GM12878 (cell line): ENCODE measurements at regions of chr1 and their contacts with region 1.

Region 1: GRCh38 chr1:232950197-232951176 is at the start of gene NTPCR:
- DNase-seq: peak; percentile 79
- ATAC-seq: peak; percentile 89
- H3K4me3 ChIP-seq: peak within 1 kb of the TSS; percentile 70
- H3K27ac ChIP-seq: peak within 1 kb of the TSS; percentile 81
- H3K4me1 ChIP-seq: peaks cover 7% of the 10 kb centered on the region
- H3K27me3 ChIP-seq: no peaks in the 10 kb centered on the region
- CTCF ChIP-seq: no peak
- EP300 ChIP-seq: no peak
- POLR2A ChIP-seq: peak; percentile 78
- RAD21 ChIP-seq: no peak
- polyA plus RNA-seq, gene NTPCR: 77.4 to 84.4 TPM

Region 2: DNA sequence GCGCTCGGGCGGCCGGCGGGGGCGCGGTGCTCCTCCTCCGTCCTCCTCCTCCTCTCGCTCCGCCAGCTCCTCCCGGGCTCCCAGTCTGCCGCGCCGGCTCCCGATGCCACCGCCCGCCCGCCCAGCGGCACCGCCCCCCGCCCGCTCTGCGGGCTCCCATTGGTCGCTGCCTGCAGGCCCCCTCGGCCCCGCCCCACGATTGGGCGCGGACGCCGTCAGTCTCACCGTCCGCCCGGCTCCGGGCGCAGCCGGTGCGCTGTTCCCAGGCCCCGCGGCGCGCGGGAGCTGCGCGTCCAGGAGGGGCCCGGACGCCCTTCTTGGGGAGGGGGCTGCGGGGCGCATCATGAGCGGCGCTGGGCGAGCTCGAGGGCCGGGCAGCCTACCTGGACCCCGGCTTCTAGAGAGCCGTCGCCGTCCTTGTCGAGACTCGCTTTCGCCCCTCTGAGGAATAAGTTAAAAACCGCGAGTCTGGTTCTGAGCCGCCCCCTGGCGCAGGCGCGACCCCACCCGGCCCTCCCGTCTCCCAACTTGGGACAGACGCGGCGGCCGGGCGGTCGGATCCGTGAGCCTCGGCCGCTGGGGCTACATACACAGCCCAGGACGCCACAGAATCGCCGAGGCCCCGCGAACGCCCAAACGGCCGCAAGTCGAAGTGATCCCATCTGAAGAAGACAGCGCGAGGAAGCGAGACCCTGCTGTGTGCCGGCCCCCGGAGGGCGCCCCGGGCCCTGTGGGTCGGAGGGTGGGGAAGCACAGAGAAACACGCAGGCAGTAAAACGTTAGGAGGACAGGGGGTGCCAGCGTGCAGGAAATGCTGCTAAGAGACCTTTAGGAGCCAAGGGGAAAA is 320.2 kb before region 1 on chr1 and contains the start of gene SIPA1L2:
- CTCF ChIA-PET with region 1: no interaction called
- POLR2A ChIA-PET with region 1: no interaction called
- RAD21 ChIA-PET with region 1: no interaction called
- SMC1A ChIA-PET with region 1: no interaction called
- in situ Hi-C with region 1: no loop called
- intact Hi-C with region 1: loop called (anchors 10 kb)
- DNase-seq: peak; percentile 8
- ATAC-seq: peak; percentile 100
- H3K4me3 ChIP-seq: peak within 1 kb of the TSS; percentile 83
- H3K27ac ChIP-seq: no peak within 1 kb of the TSS
- H3K4me1 ChIP-seq: no peaks in the 10 kb centered on the region
- H3K27me3 ChIP-seq: peaks cover 2 to 22% of the 10 kb centered on the region in 2 experiments; a peak in 3 of 4 replicates
- CTCF ChIP-seq: peak in 2 of 3 experiments; percentile 29 to 41; a peak in 4 of 6 replicates
- EP300 ChIP-seq: no peak
- POLR2A ChIP-seq: no peak
- RAD21 ChIP-seq: peak; percentile 25; the same call in 1 of the 2 replicates
- polyA plus RNA-seq, gene SIPA1L2: not detected

Region 3: GRCh38 chr1:232805269-232806185 is 145.0 kb before region 1 on chr1 and contains the start of gene MAP10:
- CTCF ChIA-PET with region 1: interaction called, 3 read pairs
- POLR2A ChIA-PET with region 1: no interaction called
- RAD21 ChIA-PET with region 1: no interaction called
- SMC1A ChIA-PET with region 1: interaction called, 3 read pairs
- in situ Hi-C with region 1: no loop called
- intact Hi-C with region 1: loop called (anchors 5 kb)
- DNase-seq: peak; percentile 51
- ATAC-seq: peak; percentile 90
- H3K4me3 ChIP-seq: peak within 1 kb of the TSS; percentile 85
- H3K27ac ChIP-seq: peak within 1 kb of the TSS; percentile 74
- H3K4me1 ChIP-seq: peaks cover 11% of the 10 kb centered on the region
- H3K27me3 ChIP-seq: no peaks in the 10 kb centered on the region
- CTCF ChIP-seq: no peak
- EP300 ChIP-seq: no peak
- POLR2A ChIP-seq: peak; percentile 83
- RAD21 ChIP-seq: no peak
- polyA plus RNA-seq, gene MAP10: 0.85 to 1.3 TPM

Region 4: DNA sequence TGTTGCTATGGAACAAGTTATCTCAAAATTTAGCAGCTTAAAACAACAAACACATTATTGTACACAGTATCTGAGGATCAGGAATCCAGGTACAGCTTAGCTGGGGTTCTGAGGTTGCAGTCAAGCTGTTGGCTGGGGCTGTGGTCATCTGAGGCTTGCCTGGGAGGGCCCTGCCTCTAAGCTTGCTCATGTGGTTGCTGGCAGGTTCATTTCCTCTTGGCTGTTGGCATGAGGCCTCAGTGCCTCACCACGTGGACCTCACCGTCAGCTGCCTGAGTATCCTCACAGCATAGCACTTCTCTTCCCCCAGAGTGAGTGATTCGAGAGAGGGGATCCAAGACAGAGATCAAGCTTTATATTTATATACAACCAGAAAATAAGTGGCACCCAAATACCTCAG is 18.5 kb after region 1 on chr1:
- CTCF ChIA-PET with region 1: interaction called, 20 read pairs
- POLR2A ChIA-PET with region 1: interaction called, 3 read pairs
- RAD21 ChIA-PET with region 1: interaction called, 3 read pairs
- SMC1A ChIA-PET with region 1: interaction called, 5 read pairs
- in situ Hi-C with region 1: no loop called
- intact Hi-C with region 1: no loop called
- DNase-seq: no peak
- ATAC-seq: peak; percentile 59
- H3K4me3 ChIP-seq: no peak overlapping the region
- H3K27ac ChIP-seq: no peak overlapping the region
- H3K4me1 ChIP-seq: no peaks in the 10 kb centered on the region
- H3K27me3 ChIP-seq: no peaks in the 10 kb centered on the region
- CTCF ChIP-seq: no peak
- EP300 ChIP-seq: no peak
- POLR2A ChIP-seq: no peak
- RAD21 ChIP-seq: no peak